Activated CD4-positive, alpha-beta memory T cell treated with anti-CD3 and anti-CD28 coated beads for 36 hours (primary cell): ENCODE measurements at regions of chr2 and their contacts with region 1.

Region 1: GRCh38 chr2:10434886-10435819 is 13.0 kb downstream of the ODC1 start:
- DNase-seq: peak; percentile 80
- H3K4me3 Mint-ChIP-seq: no peak overlapping the region
- H3K27ac Mint-ChIP-seq: no peak overlapping the region
- H3K4me1 Mint-ChIP-seq: peaks cover 12% of the 10 kb centered on the region
- H3K27me3 Mint-ChIP-seq: peaks cover 13% of the 10 kb centered on the region

Region 2: DNA sequence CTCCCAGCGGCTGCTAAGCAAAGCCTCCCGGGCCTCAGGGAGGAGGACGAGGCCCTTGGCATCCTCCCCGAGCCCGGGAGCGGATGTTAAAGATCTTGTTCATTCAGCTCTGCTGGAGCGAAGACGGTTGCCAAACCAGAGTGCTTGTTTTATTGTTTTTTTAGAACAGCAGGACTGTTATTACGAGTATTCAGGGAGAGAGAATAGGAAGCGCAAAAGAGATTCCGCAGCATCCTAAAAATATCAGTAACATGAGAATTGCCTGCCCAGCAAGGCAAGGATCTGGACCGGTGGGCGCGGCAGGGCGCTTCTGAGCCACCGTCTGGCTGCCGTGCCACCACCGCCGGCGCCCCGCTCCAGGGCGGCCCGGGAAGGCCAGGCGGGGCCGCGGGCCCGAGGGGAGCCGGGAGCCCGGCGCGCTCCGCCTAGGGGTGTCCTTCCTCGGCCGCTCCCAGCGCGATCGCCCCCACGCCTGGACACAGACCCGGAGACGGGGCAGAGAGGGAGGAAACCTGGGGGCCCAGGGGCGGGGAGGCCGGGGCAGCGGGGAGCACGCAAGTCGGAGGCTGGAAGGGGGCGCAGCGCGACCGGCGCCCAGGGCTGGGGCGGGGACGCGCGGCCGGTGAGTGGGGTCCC is 355.8 kb before region 1 on chr2:
- CTCF ChIA-PET with region 1: interaction called, 214 read pairs
- POLR2A ChIA-PET with region 1: no interaction called
- intact Hi-C with region 1: no loop called
- DNase-seq: no peak
- H3K4me3 Mint-ChIP-seq: peak overlapping the region; percentile 60
- H3K27ac Mint-ChIP-seq: no peak overlapping the region
- H3K4me1 Mint-ChIP-seq: peaks cover 14% of the 10 kb centered on the region
- H3K27me3 Mint-ChIP-seq: peaks cover 71% of the 10 kb centered on the region

Region 3: GRCh38 chr2:10141736-10142642 is 293.2 kb before region 1 on chr2:
- CTCF ChIA-PET with region 1: interaction called, 69 read pairs
- POLR2A ChIA-PET with region 1: no interaction called
- intact Hi-C with region 1: no loop called
- DNase-seq: peak; percentile 43
- H3K4me3 Mint-ChIP-seq: no peak overlapping the region
- H3K27ac Mint-ChIP-seq: no peak overlapping the region
- H3K4me1 Mint-ChIP-seq: peaks cover 13% of the 10 kb centered on the region
- H3K27me3 Mint-ChIP-seq: no peaks in the 10 kb centered on the region

Region 4: GRCh38 chr2:10302479-10303180 is 132.5 kb before region 1 on chr2 and contains the start of gene HPCAL1:
- CTCF ChIA-PET with region 1: interaction called, 11 read pairs
- POLR2A ChIA-PET with region 1: no interaction called
- intact Hi-C with region 1: no loop called
- DNase-seq: peak; percentile 88
- H3K4me3 Mint-ChIP-seq: peak within 1 kb of the TSS; percentile 99
- H3K27ac Mint-ChIP-seq: peak within 1 kb of the TSS; percentile 83
- H3K4me1 Mint-ChIP-seq: peaks cover 72% of the 10 kb centered on the region
- H3K27me3 Mint-ChIP-seq: no peaks in the 10 kb centered on the region
- total RNA-seq, gene HPCAL1: 82.2 to 82.6 TPM

Region 5: GRCh38 chr2:10424051-10424450 is 11.1 kb before region 1 on chr2:
- CTCF ChIA-PET with region 1: interaction called, 24 read pairs
- POLR2A ChIA-PET with region 1: no interaction called
- intact Hi-C with region 1: no loop called
- DNase-seq: no peak
- H3K4me3 Mint-ChIP-seq: no peak overlapping the region
- H3K27ac Mint-ChIP-seq: no peak overlapping the region
- H3K4me1 Mint-ChIP-seq: no peaks in the 10 kb centered on the region
- H3K27me3 Mint-ChIP-seq: no peaks in the 10 kb centered on the region